ENCODE measurements at regions of chrX and their contacts with region 1.

Region 1: DNA sequence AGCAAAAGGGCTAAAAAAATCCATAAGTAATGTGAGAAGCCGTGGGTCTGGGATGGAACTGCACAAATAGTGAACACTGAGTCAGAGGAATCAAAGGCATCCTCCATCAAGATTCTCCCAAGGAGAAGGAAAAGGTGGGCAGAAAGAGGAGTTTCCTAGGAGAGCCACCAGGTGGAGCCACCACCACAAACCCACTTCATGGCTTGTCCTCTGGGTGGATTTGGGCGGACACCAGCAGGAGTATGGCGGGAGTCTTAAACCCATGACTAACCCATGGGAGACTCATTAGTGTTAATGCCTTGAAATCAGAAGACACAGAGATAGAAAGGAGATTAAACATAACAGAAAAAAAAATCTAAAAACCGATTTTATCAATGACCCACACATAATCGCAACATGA is 147.7 kb downstream of the SH3KBP1 start:
- DNase-seq: no peak

Region 2: GRCh38 chrX:19758539-19758938 is 18.9 kb after region 1 on chrX:
- intact Hi-C with region 1: no loop called
- DNase-seq: no peak

Region 3: DNA sequence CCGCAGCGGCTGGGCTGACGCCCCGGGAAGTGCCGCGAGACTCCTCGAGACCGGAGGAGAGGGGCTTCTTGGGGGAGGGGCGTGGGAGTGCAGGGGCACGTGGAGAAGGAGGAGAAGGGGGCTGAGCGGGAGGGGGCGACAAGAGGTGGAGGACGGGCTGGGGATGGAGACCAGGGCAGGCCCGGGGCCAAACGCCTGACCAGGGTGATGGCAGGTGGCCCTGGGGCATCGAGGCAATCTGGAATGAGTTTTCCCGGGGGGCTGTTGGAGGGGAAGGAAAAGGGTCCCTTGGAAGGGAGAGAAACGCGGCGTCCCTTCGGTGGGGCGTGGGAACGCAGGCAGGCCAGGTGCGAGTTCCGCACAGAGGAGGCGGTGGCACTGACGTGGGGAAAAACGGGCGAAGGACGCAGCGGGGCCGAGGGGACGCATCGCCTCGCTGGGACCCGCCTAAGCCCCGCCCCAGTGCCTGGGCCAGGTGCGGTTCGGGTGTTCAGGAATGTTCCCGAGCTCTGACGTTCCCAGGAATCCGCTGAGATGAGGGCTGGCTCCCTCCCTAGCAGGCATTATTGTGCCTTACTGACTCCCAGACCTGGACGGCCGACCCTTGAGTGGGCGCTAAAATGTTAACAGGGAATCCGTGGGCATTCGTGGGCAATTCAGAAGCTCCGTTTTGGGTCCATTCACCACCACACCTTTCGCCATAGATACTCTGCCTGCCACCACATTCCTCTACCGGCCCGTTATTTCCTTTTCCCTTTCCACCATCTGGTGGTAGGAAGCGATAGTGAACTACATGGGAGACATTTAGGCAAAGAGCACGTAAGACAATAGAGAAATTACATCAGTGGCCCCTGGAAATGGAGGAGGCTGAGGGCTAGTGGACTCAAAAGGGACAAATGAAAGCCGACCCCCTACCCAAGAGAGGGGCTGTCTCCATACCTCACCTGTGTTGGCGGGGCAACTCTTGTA is 148.5 kb after region 1 on chrX:
- intact Hi-C with region 1: loop called in 1 of 2 experiments (anchors 10 kb)
- DNase-seq: peak; percentile 83